Activated naive CD4-positive, alpha-beta T cell treated with anti-CD3 and anti-CD28 coated beads for 36 hours (primary cell): ENCODE measurements at regions of chr1 and their contacts with region 1.

Region 1: GRCh38 chr1:207963427-207964194 is 52.7 kb upstream of the CD34 start:
- DNase-seq: peak; percentile 80
- H3K4me3 Mint-ChIP-seq: peak overlapping the region; percentile 81
- H3K27ac Mint-ChIP-seq: no peak overlapping the region
- H3K4me1 Mint-ChIP-seq: peaks cover 10% of the 10 kb centered on the region
- H3K27me3 Mint-ChIP-seq: peaks cover 27% of the 10 kb centered on the region

Region 2: DNA sequence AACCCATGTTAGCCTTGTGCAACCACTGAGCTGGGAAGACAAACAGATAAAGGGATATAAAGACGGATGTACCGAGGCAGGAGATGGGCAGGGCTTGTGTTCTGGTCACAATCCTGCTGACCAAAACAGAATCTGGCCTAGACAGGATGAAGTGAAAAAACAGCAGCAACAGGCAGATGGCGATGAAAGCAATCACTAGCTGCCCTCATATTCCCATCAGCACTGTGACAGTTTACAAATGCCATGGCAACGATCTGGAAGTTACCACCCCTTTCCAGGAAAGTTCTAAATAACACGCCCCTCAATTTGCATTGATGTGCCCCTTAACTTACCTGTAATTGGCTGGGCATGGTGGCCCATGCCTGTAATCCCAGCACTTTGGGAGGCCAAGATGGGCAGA is 252.3 kb before region 1 on chr1:
- CTCF ChIA-PET with region 1: no interaction called
- intact Hi-C with region 1: loop called (anchors 1 kb)
- DNase-seq: peak; percentile 18
- H3K4me3 Mint-ChIP-seq: no peak overlapping the region
- H3K27ac Mint-ChIP-seq: no peak overlapping the region
- H3K4me1 Mint-ChIP-seq: no peaks in the 10 kb centered on the region
- H3K27me3 Mint-ChIP-seq: no peaks in the 10 kb centered on the region

Region 3: DNA sequence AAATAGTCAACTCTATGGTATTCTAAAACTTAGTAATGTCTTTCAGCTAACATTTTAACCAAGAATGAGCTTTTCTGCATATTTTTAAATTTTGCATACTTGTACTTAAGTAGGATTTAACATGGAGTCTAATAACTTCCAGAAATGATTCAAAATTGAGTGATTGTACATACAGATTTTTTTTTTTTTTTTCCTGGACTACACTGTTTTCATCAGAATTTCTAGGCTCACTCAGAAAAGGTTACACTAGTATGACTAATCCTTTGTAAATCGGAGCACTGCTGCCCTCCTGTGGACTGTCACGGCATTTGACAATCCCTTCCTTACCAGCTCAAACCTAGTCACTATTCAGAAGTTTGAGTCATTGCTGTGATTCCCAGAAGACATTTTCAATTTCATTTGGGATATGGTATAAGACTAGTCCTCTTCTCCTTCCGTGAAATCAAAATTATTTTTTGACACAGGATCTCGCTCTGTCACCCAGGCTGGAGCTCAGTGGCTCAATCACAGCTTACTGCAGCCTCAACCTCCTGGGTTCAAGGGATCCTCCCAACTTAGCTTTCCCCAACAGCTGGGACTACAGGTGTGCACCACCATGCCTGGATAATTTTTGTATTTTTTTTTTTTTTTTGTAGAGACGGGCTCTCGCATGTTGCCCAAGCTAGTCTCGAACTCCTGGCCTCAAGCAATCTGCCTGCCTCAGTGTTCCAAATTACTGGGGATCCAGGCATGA is 166.2 kb before region 1 on chr1:
- CTCF ChIA-PET with region 1: interaction called, 17 read pairs
- intact Hi-C with region 1: loop called (anchors 1 kb)
- DNase-seq: peak; percentile 94
- H3K4me3 Mint-ChIP-seq: no peak overlapping the region
- H3K27ac Mint-ChIP-seq: no peak overlapping the region
- H3K4me1 Mint-ChIP-seq: peaks cover 29% of the 10 kb centered on the region
- H3K27me3 Mint-ChIP-seq: no peaks in the 10 kb centered on the region

Region 4: GRCh38 chr1:207876131-207876530 is 87.5 kb before region 1 on chr1:
- CTCF ChIA-PET with region 1: interaction called, 10 read pairs
- intact Hi-C with region 1: no loop called
- DNase-seq: peak; percentile 23
- H3K4me3 Mint-ChIP-seq: no peak overlapping the region
- H3K27ac Mint-ChIP-seq: no peak overlapping the region
- H3K4me1 Mint-ChIP-seq: peaks cover 60% of the 10 kb centered on the region
- H3K27me3 Mint-ChIP-seq: no peaks in the 10 kb centered on the region

Region 5: GRCh38 chr1:207903767-207904166 is 59.8 kb before region 1 on chr1:
- CTCF ChIA-PET with region 1: interaction called, 22 read pairs
- intact Hi-C with region 1: no loop called
- DNase-seq: no peak
- H3K4me3 Mint-ChIP-seq: no peak overlapping the region
- H3K27ac Mint-ChIP-seq: no peak overlapping the region
- H3K4me1 Mint-ChIP-seq: peaks cover 12% of the 10 kb centered on the region
- H3K27me3 Mint-ChIP-seq: peaks cover 8% of the 10 kb centered on the region

Region 6: GRCh38 chr1:208093754-208094719 is 130.4 kb after region 1 on chr1:
- CTCF ChIA-PET with region 1: no interaction called
- intact Hi-C with region 1: no loop called
- DNase-seq: peak; percentile 82
- H3K4me3 Mint-ChIP-seq: no peak overlapping the region
- H3K27ac Mint-ChIP-seq: no peak overlapping the region
- H3K4me1 Mint-ChIP-seq: no peaks in the 10 kb centered on the region
- H3K27me3 Mint-ChIP-seq: no peaks in the 10 kb centered on the region